ENCODE measurements at regions of chr2 and their contacts with region 1.

Region 1: DNA sequence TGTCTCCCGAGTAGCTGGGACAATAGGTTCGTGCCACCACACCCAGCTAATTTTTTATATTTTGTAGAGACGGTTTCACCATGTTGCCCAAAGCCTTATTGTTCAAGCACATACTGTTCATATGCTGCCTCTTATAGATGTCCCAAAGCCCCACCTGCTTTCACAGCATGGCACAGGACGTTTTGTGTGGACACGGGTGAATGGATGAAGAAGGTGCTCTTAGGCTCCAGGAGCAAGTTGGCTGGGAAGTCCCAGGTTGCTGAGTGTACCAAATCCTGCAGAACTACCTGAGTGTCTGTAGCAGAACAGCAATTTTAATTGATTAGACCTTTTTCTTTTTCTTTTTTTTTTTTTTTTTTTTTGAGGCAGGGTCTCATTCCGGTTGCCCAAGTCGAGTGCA is 10.5 kb upstream of the SAG start:
- DNase-seq: no peak
- ATAC-seq: no peak
- H3K4me3 ChIP-seq: no peak overlapping the region
- H3K27ac ChIP-seq: no peak overlapping the region
- H3K4me1 ChIP-seq: no peaks in the 10 kb centered on the region; the same call in 1 of the 2 replicates
- H3K27me3 ChIP-seq: no peaks in the 10 kb centered on the region
- CTCF ChIP-seq: no peak

Region 2: GRCh38 chr2:232890896-232891601 is 406.0 kb before region 1 on chr2:
- CTCF ChIA-PET with region 1: no interaction called
- POLR2A ChIA-PET with region 1: no interaction called
- in situ Hi-C with region 1: no loop called
- intact Hi-C with region 1: no loop called
- DNase-seq: no peak
- ATAC-seq: 0 out of 2 replicates have a peak, but pooled peaks have one; percentile 9
- H3K4me3 ChIP-seq: no peak overlapping the region
- H3K27ac ChIP-seq: no peak overlapping the region
- H3K4me1 ChIP-seq: no peaks in the 10 kb centered on the region
- H3K27me3 ChIP-seq: no peaks in the 10 kb centered on the region
- CTCF ChIP-seq: no peak

Region 3: GRCh38 chr2:233501198-233502076 is 204.4 kb after region 1 on chr2:
- CTCF ChIA-PET with region 1: no interaction called
- POLR2A ChIA-PET with region 1: interaction called, 16 read pairs
- in situ Hi-C with region 1: no loop called
- intact Hi-C with region 1: no loop called
- DNase-seq: no peak
- ATAC-seq: no peak
- H3K4me3 ChIP-seq: no peak overlapping the region
- H3K27ac ChIP-seq: no peak overlapping the region
- H3K4me1 ChIP-seq: no peaks in the 10 kb centered on the region
- H3K27me3 ChIP-seq: no peaks in the 10 kb centered on the region
- CTCF ChIP-seq: no peak

Region 4: DNA sequence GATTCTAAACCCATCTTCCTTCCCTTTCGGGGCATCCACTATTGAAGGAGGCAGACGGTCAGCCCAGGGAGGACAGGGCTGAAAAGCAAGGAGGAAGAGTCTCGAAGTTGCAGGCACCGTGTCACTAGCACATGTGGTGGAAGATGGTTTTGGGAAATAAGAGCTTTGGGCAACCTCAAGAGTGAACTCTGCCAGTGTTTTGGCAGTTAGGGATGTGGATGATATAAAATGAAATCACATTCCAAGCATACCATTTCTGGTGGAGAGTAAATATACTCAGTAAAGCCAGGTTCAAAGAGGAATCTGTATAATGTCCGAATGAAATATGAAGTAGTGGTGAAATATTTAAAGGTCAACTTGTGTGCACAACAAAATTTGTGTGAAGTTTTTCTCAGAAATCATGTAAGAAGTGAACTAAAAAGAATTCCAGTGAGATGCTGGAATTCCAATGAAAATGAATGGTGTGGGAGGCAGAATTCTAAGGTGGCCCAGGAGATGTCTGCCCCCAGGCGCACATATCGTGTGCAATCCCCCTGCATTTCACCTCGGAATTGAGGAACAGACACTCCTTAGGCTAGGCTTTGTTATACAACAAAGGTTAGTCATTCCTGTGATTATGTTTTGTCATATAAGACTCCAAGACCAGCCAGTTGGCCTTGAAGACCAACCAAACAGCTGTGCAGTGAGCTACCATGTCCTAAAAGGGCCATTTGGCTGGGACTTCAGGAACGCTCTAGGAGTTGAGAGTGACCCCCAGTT is 1801.8 kb after region 1 on chr2:
- CTCF ChIA-PET with region 1: no interaction called
- POLR2A ChIA-PET with region 1: no interaction called
- in situ Hi-C with region 1: no loop called
- intact Hi-C with region 1: no loop called
- DNase-seq: no peak
- ATAC-seq: peak; percentile 84
- H3K4me3 ChIP-seq: no peak overlapping the region
- H3K27ac ChIP-seq: peak overlapping the region; percentile 60
- H3K4me1 ChIP-seq: peaks cover 20% of the 10 kb centered on the region
- H3K27me3 ChIP-seq: no peaks in the 10 kb centered on the region
- CTCF ChIP-seq: no peak